HCT116 (cell line): ENCODE measurements at regions of chr7 and their contacts with region 1.

Region 1: DNA sequence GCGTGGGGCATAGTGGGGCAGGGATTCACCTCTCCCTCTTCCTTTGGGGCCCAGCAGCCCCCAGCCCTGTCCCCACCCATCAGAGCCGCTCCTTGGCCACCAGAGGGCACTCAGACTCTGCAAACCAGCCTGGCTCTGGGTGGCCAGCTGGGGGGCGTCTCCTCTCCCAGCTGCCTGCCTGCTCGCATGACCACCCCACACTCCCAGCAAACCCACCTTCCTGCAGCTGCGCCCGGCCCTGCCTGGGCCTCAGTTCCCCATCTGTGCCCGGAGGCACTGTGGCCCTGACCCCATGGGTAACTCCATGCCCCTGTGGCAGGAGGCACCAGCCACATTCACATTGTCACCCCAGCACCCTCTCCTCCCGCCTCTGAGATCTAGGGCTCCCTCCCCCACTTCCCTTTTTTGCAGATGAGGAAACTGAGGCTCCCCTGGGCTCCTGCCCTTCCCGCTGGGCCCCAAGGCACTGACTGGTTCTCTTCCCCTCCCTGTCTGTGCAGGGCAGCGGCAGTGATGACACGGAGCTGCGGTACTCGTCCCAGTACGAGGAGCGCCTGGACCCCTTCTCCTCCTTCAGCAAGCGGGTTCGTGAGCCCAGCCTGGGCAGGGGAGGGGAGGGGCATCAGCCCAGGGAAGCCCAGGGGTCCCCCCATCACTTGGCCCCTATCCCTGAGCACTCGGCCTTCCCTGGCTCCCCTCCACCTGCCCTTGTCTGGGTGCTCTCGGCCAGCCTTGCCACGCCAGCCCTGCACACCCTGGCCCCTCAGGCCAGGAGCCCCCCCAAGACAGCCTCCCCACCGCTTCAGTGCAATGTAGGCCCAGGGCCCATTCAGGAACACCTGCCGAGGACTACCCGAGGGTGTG is 6.9 kb upstream of the SH2B2 start:
- DNase-seq: peak; percentile 27
- ATAC-seq: peak; percentile 94
- H3K4me3 ChIP-seq: no peak overlapping the region
- H3K27ac ChIP-seq: no peak overlapping the region
- H3K4me1 ChIP-seq: peaks cover 4 to 12% of the 10 kb centered on the region in 2 experiments; a peak in 3 of 4 replicates
- H3K27me3 ChIP-seq: no peaks in the 10 kb centered on the region
- CTCF ChIP-seq: peak in 2 of 3 experiments; percentile 91 to 92; a peak in 4 of 6 replicates
- POLR2A ChIP-seq: no peak
- RAD21 ChIP-seq: no peak

Region 2: GRCh38 chr7:101436857-101437576 is 842.8 kb before region 1 on chr7:
- CTCF ChIA-PET with region 1: no interaction called
- POLR2A ChIA-PET with region 1: no interaction called
- RAD21 ChIA-PET with region 1: no interaction called
- intact Hi-C with region 1: no loop called
- DNase-seq: peak; percentile 37
- ATAC-seq: peak; percentile 90
- H3K4me3 ChIP-seq: no peak overlapping the region
- H3K27ac ChIP-seq: no peak overlapping the region
- H3K4me1 ChIP-seq: peaks cover 7 to 14% of the 10 kb centered on the region in 2 experiments; a peak in 3 of 4 replicates
- H3K27me3 ChIP-seq: no peaks in the 10 kb centered on the region
- CTCF ChIP-seq: no peak
- POLR2A ChIP-seq: no peak
- RAD21 ChIP-seq: no peak

Region 3: DNA sequence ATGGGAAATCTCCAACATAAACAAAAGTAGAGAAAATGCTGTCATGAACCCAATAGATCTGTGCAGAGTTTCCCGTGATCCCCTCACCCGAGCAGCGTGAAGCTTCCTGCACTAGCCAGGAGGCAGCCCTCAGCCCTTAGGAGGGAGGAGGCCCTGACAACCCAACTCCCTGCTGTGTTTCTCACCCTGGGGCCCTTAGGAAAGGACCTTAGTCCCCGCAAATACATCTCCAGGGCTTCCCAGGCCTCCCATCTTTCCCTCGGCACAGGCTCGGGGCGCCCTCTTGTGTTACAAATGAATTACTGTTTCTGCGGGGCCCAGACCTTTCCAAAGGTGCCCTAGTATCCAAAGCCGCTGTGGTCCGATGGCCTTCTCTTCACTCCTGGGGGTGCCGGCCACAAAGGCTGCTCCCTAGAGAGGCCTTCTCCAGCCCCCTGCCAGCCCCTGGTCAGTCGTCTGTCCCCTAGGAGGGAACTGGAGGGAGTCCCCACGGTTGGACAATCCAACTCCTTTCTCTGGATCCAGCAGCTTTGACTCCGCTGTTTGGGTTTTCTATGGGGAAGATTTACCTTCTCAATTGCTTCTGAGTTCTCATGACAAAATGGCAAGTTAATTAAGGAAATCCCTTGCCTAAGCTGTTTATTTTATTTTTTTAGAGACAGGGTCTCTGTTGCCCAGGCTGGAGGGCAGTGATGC is 43.0 kb before region 1 on chr7:
- CTCF ChIA-PET with region 1: no interaction called
- POLR2A ChIA-PET with region 1: no interaction called
- RAD21 ChIA-PET with region 1: no interaction called
- intact Hi-C with region 1: no loop called
- DNase-seq: peak; percentile 28
- ATAC-seq: peak; percentile 96
- H3K4me3 ChIP-seq: no peak overlapping the region
- H3K27ac ChIP-seq: no peak overlapping the region
- H3K4me1 ChIP-seq: peaks cover 0 to 13% of the 10 kb centered on the region in 2 experiments; a peak in 1 of 4 replicates
- H3K27me3 ChIP-seq: no peaks in the 10 kb centered on the region
- CTCF ChIP-seq: peak; percentile 75 to 90 (median 86); a peak in 5 of 6 replicates
- POLR2A ChIP-seq: no peak
- RAD21 ChIP-seq: peak; percentile 98

Region 4: GRCh38 chr7:102390697-102391484 is 111.1 kb after region 1 on chr7:
- CTCF ChIA-PET with region 1: interaction called, 5 read pairs
- POLR2A ChIA-PET with region 1: no interaction called
- RAD21 ChIA-PET with region 1: interaction called in 1 of 2 experiments, 4 read pairs
- intact Hi-C with region 1: loop called (anchors 1 kb)
- DNase-seq: peak; percentile 60
- ATAC-seq: peak; percentile 91
- H3K4me3 ChIP-seq: no peak overlapping the region
- H3K27ac ChIP-seq: no peak overlapping the region
- H3K4me1 ChIP-seq: peaks cover 19 to 21% of the 10 kb centered on the region in 2 experiments
- H3K27me3 ChIP-seq: no peaks in the 10 kb centered on the region
- CTCF ChIP-seq: peak; percentile 84 to 95 (median 92)
- POLR2A ChIP-seq: no peak
- RAD21 ChIP-seq: peak; percentile 93

Region 5: GRCh38 chr7:103031781-103032180 is 752.0 kb after region 1 on chr7:
- CTCF ChIA-PET with region 1: no interaction called
- POLR2A ChIA-PET with region 1: no interaction called
- RAD21 ChIA-PET with region 1: no interaction called
- intact Hi-C with region 1: no loop called
- DNase-seq: no peak
- ATAC-seq: no peak
- H3K4me3 ChIP-seq: no peak overlapping the region
- H3K27ac ChIP-seq: no peak overlapping the region
- H3K4me1 ChIP-seq: no peaks in the 10 kb centered on the region
- H3K27me3 ChIP-seq: no peaks in the 10 kb centered on the region
- CTCF ChIP-seq: no peak
- POLR2A ChIP-seq: no peak
- RAD21 ChIP-seq: no peak